CD8-positive, alpha-beta memory T cell (primary cell): ENCODE measurements at regions of chr15 and their contacts with region 1.

Region 1: GRCh38 chr15:77107531-77108355 is 36.8 kb upstream of the TSPAN3 start:
- DNase-seq: peak in 3 of 5 donors; percentile 5 to 48 (median 10)
- H3K4me3 ChIP-seq: no peak overlapping the region
- H3K4me3 Mint-ChIP-seq: no peak overlapping the region
- H3K27ac ChIP-seq: no peak overlapping the region
- H3K27ac Mint-ChIP-seq: peak overlapping the region in 2 of 8 donors; percentile 14 to 15
- H3K4me1 ChIP-seq: no peaks in the 10 kb centered on the region
- H3K4me1 Mint-ChIP-seq: no peaks in the 10 kb centered on the region
- H3K27me3 ChIP-seq: no peaks in the 10 kb centered on the region
- H3K27me3 Mint-ChIP-seq: peaks cover 0 to 2% of the 10 kb centered on the region in 2 donors

Region 2: GRCh38 chr15:77094397-77095030 is 13.2 kb before region 1 on chr15:
- CTCF ChIA-PET with region 1: no interaction called
- POLR2A ChIA-PET with region 1: no interaction called
- DNase-seq: no peak
- H3K4me3 ChIP-seq: no peak overlapping the region
- H3K4me3 Mint-ChIP-seq: no peak overlapping the region
- H3K27ac ChIP-seq: no peak overlapping the region
- H3K27ac Mint-ChIP-seq: no peak overlapping the region
- H3K4me1 ChIP-seq: no peaks in the 10 kb centered on the region
- H3K4me1 Mint-ChIP-seq: no peaks in the 10 kb centered on the region
- H3K27me3 ChIP-seq: no peaks in the 10 kb centered on the region
- H3K27me3 Mint-ChIP-seq: peaks cover 0 to 12% of the 10 kb centered on the region in 2 donors

Region 3: DNA sequence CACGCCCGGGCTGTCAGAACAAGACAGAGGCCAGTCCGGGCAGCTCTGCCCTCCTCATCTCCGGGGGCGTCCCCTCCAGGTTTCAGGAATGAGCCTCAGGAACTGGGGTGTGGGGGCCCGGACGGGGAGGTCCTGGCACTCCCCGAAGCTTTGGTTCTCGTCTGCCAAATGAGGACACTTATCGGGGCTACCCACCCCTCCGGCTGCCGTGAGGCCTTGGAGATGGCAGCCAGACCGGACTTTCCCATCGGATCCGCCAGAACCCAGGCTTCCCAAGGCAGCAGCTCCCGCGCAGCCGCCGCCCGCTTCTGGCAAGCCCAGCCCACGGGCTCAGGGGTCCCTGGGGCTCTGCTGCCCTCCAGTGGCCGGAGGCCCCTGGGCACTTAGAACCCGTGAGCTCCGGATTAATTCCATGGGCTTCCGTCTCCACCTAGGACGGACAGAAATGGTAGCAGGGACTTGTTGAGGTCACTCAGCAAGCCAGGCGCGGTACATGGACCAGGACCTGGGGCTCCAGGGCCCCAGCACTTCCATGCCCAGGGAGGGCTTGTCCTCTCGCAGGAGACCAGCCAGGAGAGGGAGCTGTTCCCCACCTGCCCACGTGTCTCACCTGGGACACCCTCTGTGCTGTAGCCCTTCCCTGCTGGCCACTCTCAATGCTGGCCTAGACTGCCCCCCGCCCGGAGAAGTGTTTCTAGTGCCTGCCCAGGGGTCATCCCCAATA is 435.6 kb after region 1 on chr15:
- CTCF ChIA-PET with region 1: interaction called, 31 read pairs
- POLR2A ChIA-PET with region 1: no interaction called
- DNase-seq: peak; percentile 57 to 80 (median 63)
- H3K4me3 ChIP-seq: peak overlapping the region; percentile 77
- H3K4me3 Mint-ChIP-seq: peak overlapping the region; percentile 70 to 92 (median 79)
- H3K27ac ChIP-seq: peak overlapping the region; percentile 43
- H3K27ac Mint-ChIP-seq: peak overlapping the region in 4 of 8 donors; percentile 15 to 73 (median 42)
- H3K4me1 ChIP-seq: peaks cover 13% of the 10 kb centered on the region
- H3K4me1 Mint-ChIP-seq: peaks cover 0 to 18% (median 4%) of the 10 kb centered on the region in 3 donors
- H3K27me3 ChIP-seq: no peaks in the 10 kb centered on the region
- H3K27me3 Mint-ChIP-seq: peaks cover under 1 to 3% of the 10 kb centered on the region in 2 donors